ENCODE measurements at regions of chr1 and their contacts with region 1.

Region 1: GRCh38 chr1:164748253-164748899 is 189.4 kb downstream of the PBX1 start:
- DNase-seq: no peak
- H3K27ac ChIP-seq: no peak overlapping the region
- CTCF ChIP-seq: no peak

Region 2: DNA sequence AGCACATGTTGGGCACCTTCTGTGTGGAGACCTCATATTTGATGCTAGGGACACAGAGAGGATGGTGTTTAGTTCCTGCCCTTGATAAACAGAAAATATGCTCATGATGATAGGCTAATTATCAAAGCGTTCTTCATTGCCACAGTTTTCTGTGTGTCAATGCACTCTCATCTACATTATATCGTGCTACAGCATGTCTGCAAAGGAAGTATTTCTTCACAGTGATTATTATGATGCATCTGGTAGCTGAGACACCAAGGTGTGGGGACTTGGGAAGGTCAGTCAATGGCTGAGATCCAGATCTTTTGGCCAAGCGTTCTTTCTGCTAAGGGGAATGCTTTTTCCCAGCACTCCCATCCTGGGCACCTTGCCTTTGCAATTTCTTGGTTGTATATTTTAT is 131.8 kb after region 1 on chr1:
- CTCF ChIA-PET with region 1: interaction called, 10 read pairs
- POLR2A ChIA-PET with region 1: no interaction called
- DNase-seq: no peak
- H3K27ac ChIP-seq: no peak overlapping the region
- CTCF ChIP-seq: no peak

Measured in RWPE1 (cell line).